Esophagus muscularis mucosa (tissue), 4 donors: ENCODE measurements at regions of chr3 and their contacts with region 1.

Region 1: DNA sequence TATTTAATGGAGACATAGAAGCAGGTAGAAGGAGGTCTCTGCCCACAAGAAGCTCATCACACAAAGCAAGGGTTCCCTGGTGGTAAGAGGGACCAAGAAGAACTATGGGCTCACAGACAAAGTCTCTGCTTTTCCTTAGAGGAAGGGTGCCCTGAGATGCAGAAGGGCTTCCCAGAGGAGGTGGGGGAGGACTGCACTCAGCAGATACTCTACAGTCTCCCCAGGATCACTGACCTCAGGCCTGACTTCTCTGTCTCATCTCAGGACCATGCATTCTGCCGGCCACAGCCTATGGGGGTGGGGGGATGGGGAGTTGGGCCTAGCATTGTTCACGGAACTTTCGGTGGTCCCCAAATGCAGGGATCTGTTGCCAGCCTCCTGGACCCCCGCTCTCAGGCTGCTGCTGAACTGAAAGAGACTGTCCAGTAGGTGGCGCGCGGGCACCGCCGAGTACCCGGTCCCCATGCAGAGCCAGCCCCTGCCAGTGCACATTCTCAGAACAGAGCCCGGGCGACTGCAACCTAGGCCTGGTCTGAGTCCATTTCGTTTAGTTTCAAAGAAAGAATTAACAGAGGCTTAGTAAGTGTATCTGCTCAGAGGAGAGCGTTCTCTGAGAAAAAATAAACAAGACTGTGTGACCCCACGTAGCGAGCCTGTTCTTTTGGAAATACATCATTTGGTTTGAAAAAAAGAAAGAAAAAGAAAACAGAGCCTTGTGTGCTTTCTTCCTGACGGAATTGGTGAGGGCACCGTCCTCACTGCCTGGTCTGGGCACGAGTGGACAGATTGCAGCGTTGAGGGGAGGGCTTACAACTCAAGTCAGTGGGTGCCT is 74.1 kb downstream of the LRTM1 start:
- DNase-seq: peak; percentile 94
- H3K4me3 ChIP-seq: no peak overlapping the region
- H3K27ac ChIP-seq: peak overlapping the region in 2 of 4 donors; percentile 2 to 44
- H3K4me1 ChIP-seq: peaks cover 5 to 32% (median 27%) of the 10 kb centered on the region in 4 donors
- H3K27me3 ChIP-seq: no peaks in the 10 kb centered on the region
- CTCF ChIP-seq: peak; percentile 85 to 90 (median 90)
- EP300 ChIP-seq: no peak
- POLR2A ChIP-seq: no peak

Region 2: GRCh38 chr3:54427941-54428871 is 425.6 kb before region 1 on chr3:
- intact Hi-C with region 1: loop called (anchors 5 kb)
- DNase-seq: no peak
- H3K4me3 ChIP-seq: no peak overlapping the region
- H3K27ac ChIP-seq: no peak overlapping the region
- H3K4me1 ChIP-seq: peaks cover 0 to 13% (median 4%) of the 10 kb centered on the region in 4 donors
- H3K27me3 ChIP-seq: no peaks in the 10 kb centered on the region
- CTCF ChIP-seq: peak; percentile 79 to 85 (median 83)
- EP300 ChIP-seq: no peak
- POLR2A ChIP-seq: no peak

Region 3: DNA sequence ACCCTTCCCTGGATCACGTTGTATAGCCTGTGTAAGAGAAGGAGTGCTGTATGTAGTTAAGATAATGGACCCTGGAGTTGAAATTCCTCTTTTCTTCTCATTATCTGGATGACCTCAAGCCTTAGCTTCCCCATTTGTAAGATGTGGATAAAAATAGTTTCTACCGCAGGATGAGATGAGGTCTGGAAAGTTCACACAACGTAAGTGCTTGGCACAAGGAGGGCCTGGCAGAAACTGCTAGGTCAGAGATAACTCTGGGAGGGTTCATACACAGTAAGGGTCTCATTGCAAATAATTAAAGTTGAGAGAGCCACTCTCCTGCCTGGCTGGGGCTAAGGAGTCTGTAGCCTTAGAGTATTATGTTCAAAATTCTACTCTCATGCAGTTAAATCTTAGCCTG is 140.3 kb before region 1 on chr3:
- intact Hi-C with region 1: no loop called
- DNase-seq: peak; percentile 42
- H3K4me3 ChIP-seq: no peak overlapping the region
- H3K27ac ChIP-seq: no peak overlapping the region
- H3K4me1 ChIP-seq: peaks cover 0 to 6% (median 0%) of the 10 kb centered on the region in 4 donors
- H3K27me3 ChIP-seq: no peaks in the 10 kb centered on the region
- CTCF ChIP-seq: no peak
- EP300 ChIP-seq: no peak
- POLR2A ChIP-seq: no peak

Region 4: DNA sequence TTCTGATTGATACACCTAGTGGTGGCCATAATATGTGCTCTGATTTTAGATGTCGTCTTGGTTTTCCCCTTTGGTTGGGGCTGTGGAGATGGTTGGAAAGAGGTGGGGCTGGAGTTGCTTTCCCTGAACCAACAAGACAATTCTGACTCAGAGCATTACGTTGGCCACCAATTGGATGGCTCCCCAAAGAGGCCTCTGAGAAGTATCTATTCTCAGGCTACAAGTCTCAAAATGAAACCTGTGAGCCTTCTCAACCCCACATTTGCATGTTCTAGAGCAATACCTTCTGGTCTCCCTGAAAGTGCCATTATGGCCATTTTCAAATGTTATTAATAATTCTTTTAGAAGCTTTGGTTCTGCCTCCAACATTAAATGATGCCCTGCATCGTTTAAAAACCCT is 821.7 kb after region 1 on chr3:
- intact Hi-C with region 1: no loop called
- DNase-seq: no peak
- H3K4me3 ChIP-seq: no peak overlapping the region
- H3K27ac ChIP-seq: no peak overlapping the region
- H3K4me1 ChIP-seq: peaks cover 0 to 31% (median 21%) of the 10 kb centered on the region in 4 donors
- H3K27me3 ChIP-seq: no peaks in the 10 kb centered on the region
- CTCF ChIP-seq: no peak
- EP300 ChIP-seq: no peak
- POLR2A ChIP-seq: no peak

Region 5: GRCh38 chr3:55718521-55718921 is 864.7 kb after region 1 on chr3:
- intact Hi-C with region 1: loop called (anchors 10 kb)
- DNase-seq: peak; percentile 39
- H3K4me3 ChIP-seq: no peak overlapping the region
- H3K27ac ChIP-seq: no peak overlapping the region
- H3K4me1 ChIP-seq: peaks cover 0 to 5% (median 0%) of the 10 kb centered on the region in 4 donors
- H3K27me3 ChIP-seq: no peaks in the 10 kb centered on the region
- CTCF ChIP-seq: no peak
- EP300 ChIP-seq: no peak
- POLR2A ChIP-seq: no peak

Region 6: DNA sequence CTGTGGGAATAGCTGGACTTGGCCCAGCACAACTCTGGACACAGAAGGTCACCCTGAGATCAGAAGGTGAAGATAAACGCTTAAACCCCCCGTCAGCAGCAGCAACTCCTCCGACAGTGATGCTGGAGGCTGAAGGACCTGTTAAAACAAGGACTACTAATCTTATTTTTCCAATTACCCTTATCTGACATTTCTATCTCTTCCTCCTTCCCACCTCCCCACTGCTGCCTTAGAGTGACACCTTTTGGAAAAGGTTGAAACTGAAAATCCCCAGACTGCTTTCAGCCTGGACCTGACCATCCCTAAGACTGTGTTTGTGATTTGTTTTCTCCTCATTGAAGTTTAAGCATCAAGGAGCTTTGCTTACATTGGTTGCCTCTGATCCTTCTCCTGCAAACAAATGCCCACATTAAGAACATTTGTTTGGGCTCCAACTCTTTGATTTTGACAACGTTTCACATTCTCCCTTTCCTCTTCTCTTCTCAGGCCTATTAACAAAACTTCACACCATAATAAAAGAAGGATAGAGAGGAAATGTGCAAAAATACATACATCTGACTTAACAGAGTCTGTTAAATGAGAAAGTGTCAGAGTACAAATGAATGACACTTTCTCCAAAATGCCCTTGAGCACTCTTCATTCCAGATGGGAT is 1043.9 kb after region 1 on chr3:
- intact Hi-C with region 1: loop called (anchors 10 kb)
- DNase-seq: peak; percentile 77
- H3K4me3 ChIP-seq: no peak overlapping the region
- H3K27ac ChIP-seq: no peak overlapping the region
- H3K4me1 ChIP-seq: no peaks in the 10 kb centered on the region
- H3K27me3 ChIP-seq: no peaks in the 10 kb centered on the region
- CTCF ChIP-seq: peak; percentile 12 to 50 (median 39)
- EP300 ChIP-seq: no peak
- POLR2A ChIP-seq: no peak

Region 7: DNA sequence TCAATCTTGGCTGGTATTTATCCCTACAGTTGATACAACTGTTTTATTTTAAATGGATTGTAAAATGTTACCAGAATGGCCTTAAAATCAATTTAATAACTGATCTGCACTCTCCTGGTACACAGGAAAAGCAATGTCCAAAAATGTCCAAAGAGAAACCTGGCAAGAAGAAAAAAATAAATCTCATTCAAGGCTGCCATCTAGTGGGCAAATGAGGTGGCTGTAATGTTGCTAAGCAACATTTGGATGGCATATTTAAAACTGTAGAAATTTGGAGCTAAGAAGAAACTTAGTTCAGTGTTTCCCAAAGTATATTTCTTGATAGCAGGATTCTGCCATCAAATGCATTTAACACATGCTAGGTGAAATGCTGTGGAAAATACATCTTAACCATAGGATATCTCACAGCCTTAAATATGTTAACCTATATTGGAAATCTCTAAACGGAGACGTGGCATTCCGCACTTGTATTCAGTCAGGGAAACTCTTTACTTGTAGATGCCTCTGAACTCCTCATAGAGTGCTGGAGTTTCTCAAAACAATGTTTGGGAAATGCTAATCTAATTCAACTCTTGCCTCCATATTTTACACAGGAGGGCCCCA is 1397.7 kb after region 1 on chr3:
- intact Hi-C with region 1: loop called (anchors 5 kb)
- DNase-seq: no peak
- H3K4me3 ChIP-seq: no peak overlapping the region
- H3K27ac ChIP-seq: no peak overlapping the region
- H3K4me1 ChIP-seq: no peaks in the 10 kb centered on the region
- H3K27me3 ChIP-seq: no peaks in the 10 kb centered on the region
- CTCF ChIP-seq: peak; percentile 71 to 82 (median 81)
- EP300 ChIP-seq: no peak
- POLR2A ChIP-seq: no peak